ENCODE measurements at regions of chr12 and their contacts with region 1.

Region 1: GRCh38 chr12:58346032-58346632 is 404.8 kb downstream of the ATP23 start:
- DNase-seq: no peak
- ATAC-seq: no peak
- H3K4me3 ChIP-seq: peak overlapping the region; percentile 3 to 26
- H3K27ac ChIP-seq: no peak overlapping the region
- H3K4me1 ChIP-seq: no peaks in the 10 kb centered on the region
- H3K27me3 ChIP-seq: no peaks in the 10 kb centered on the region

Region 2: DNA sequence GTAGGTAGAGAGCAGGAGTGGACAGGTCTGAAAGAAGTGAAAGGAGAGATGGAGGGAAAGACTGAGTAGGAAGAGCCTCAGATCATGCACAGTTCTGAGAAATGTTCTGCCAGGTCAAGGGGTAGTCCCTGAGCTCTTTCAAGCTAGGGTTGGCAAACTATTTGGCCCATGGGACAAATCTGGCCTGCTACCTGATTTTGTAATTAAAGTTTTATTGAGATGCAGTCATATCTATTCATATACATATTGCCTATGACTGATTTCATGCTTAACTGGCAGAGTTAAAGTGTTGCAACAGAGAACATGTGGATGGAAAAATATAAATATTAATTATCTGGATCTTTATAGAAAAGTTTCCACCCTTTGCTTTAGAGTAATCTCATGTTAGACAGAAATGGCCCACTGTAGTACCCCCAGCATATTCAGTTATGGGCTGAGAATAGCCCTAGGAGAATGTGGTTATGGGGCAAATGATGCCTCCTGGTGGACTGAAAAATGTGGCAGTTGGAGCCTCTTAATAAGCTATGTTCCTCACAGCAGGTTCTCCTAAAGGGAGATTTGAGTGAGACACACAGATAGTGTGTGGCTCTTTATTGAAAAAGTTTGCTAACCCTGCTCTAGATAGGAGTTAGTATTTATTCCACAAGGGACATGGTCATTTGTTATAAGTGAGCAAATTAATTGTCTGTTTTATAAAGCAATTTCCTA is 97.3 kb after region 1 on chr12:
- intact Hi-C with region 1: loop called (anchors 5 kb)
- DNase-seq: no peak
- ATAC-seq: no peak
- H3K4me3 ChIP-seq: no peak overlapping the region
- H3K27ac ChIP-seq: no peak overlapping the region
- H3K4me1 ChIP-seq: peaks cover 0 to 3% of the 10 kb centered on the region in 2 donors
- H3K27me3 ChIP-seq: no peaks in the 10 kb centered on the region

Region 3: GRCh38 chr12:58540480-58541299 is 194.6 kb after region 1 on chr12:
- intact Hi-C with region 1: loop called (anchors 5 kb)
- DNase-seq: peak; percentile 74 to 88
- ATAC-seq: peak; percentile 93
- H3K4me3 ChIP-seq: no peak overlapping the region
- H3K27ac ChIP-seq: no peak overlapping the region
- H3K4me1 ChIP-seq: peaks cover 0 to 3% of the 10 kb centered on the region in 2 donors
- H3K27me3 ChIP-seq: no peaks in the 10 kb centered on the region

Region 4: GRCh38 chr12:59087077-59087673 is 741.0 kb after region 1 on chr12:
- intact Hi-C with region 1: loop called (anchors 2 to 10 kb)
- DNase-seq: no peak
- ATAC-seq: no peak
- H3K4me3 ChIP-seq: no peak overlapping the region
- H3K27ac ChIP-seq: no peak overlapping the region
- H3K4me1 ChIP-seq: no peaks in the 10 kb centered on the region
- H3K27me3 ChIP-seq: no peaks in the 10 kb centered on the region

Region 5: GRCh38 chr12:59113831-59114615 is 767.9 kb after region 1 on chr12:
- intact Hi-C with region 1: loop called in 1 of 2 experiments (anchors 10 kb)
- DNase-seq: peak; percentile 81 to 91
- ATAC-seq: peak; percentile 91
- H3K4me3 ChIP-seq: no peak overlapping the region
- H3K27ac ChIP-seq: no peak overlapping the region
- H3K4me1 ChIP-seq: peaks cover 2% of the 10 kb centered on the region in 2 donors
- H3K27me3 ChIP-seq: no peaks in the 10 kb centered on the region

Region 6: DNA sequence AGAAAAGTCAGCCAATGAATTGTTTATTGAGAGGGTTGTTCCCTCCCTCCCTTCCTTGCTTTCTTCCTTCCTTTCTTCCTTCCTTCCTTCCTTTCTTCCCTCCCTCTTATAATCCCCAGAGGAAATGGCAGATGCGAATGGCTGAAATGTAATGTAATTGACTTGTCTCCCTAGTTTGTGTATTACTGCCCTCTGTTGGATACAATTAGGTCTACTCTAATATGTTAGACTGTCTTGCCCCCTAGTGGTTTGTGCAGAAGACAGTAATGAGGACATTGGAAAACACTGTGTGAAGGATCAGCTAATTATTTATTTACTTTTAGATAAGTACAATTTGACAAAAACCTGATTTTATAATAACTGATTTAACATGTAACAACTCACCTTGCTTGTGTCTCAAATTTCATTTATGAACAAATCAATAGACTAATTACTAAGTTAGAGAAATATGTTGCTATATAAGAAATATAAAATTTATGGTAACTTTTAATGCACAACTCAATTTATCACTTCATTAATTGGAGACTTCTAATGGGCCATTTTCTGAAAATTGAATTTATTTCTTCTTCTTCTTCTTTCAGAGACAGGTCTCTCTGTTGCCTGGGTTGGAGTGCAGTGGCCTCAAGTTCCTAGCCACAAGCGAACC is 804.0 kb after region 1 on chr12:
- intact Hi-C with region 1: loop called in 1 of 2 experiments (anchors 10 kb)
- DNase-seq: no peak
- ATAC-seq: peak; percentile 95
- H3K4me3 ChIP-seq: no peak overlapping the region
- H3K27ac ChIP-seq: no peak overlapping the region
- H3K4me1 ChIP-seq: no peaks in the 10 kb centered on the region
- H3K27me3 ChIP-seq: no peaks in the 10 kb centered on the region

Region 7: DNA sequence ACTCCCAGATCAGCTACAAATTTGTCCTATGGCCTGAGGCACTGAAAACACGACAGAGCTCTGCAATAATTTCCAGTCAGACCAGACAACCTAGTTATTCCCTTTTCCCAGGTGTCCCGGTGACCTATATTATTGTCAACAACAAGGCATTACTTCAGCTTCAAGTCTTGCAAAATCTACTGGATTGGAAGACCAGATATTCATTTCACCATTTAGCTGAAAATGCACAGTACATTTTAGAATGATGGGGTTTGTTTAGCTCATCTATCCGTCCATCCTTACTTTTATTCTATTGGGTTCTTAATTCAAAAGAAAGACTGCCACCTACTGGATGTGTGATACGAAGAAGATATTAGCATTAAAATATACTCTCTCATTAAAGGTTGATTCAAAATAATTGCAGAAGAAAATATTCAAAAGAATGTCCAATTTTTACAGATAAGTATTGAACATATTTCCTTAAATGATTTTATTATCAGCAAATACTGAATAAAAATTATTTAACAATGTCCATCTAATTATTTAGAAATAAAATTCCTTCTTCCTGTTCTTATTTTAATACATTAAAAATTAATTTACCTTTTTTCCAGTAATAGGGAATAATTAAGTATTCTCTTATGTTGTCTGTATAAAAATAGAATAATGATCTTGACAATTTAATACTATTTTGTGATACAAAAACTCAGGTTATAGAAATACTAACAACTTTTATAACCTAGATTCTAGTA is 819.0 kb after region 1 on chr12:
- intact Hi-C with region 1: loop called in 1 of 2 experiments (anchors 5 kb)
- DNase-seq: no peak
- ATAC-seq: no peak
- H3K4me3 ChIP-seq: no peak overlapping the region
- H3K27ac ChIP-seq: no peak overlapping the region
- H3K4me1 ChIP-seq: no peaks in the 10 kb centered on the region
- H3K27me3 ChIP-seq: no peaks in the 10 kb centered on the region